ENCODE measurements at regions of chr9 and their contacts with region 1.

Region 1: DNA sequence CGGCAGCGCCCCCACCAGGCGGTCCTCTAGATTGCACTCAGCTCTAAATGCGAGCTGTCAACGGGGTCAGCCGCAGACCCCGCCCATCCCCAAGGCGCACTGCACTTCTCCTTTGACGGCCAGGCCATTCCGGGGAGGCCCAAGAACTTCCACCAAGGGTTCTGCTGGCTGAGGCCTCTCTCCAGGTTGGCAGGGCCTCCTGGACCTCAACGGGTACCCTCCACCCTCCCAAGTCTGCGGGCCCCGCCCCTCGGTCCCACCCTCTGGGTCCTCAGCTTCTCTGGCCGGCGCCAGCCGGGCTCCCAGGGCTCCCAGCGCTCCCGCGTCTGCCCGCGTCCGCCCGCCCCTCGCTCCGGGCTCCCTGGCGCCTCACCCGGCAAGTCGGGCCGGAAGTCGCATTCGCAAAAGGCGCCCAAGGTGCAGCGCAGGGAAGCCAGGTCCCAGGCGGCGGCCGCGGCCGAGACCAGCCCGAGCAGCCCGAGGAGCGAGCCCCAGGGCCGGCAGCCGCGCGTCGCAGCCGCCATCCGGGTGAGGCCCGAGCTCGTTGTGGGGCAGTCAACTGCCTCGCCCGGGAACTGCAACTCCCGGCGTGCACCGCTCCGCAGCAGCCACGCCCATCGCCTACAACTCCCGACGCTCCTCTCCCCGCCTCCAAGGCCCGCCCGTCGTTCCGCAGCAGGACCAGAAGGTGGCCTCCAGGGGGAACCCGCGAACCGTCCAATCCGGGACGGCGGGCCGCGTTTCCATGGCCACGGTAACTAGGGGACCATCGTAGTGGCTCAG is at the start of gene TOR2A:
- DNase-seq: peak; percentile 99
- ATAC-seq: peak; percentile 90
- H3K4me3 Mint-ChIP-seq: peak within 1 kb of the TSS; percentile 72
- H3K27ac Mint-ChIP-seq: no peak within 1 kb of the TSS
- H3K4me1 Mint-ChIP-seq: peaks cover 11% of the 10 kb centered on the region
- H3K27me3 Mint-ChIP-seq: peaks cover 7% of the 10 kb centered on the region
- CTCF ChIP-seq: peak; percentile 63
- total RNA-seq, gene TOR2A: 14.4 to 19.4 TPM (median 16.6 TPM) in 3 replicates

Region 2: GRCh38 chr9:127525401-127526187 is 209.3 kb before region 1 on chr9:
- CTCF ChIA-PET with region 1: interaction called, 40 read pairs
- POLR2A ChIA-PET with region 1: interaction called, 4 read pairs
- DNase-seq: no peak
- ATAC-seq: no peak
- H3K4me3 Mint-ChIP-seq: no peak overlapping the region
- H3K27ac Mint-ChIP-seq: no peak overlapping the region; the same call in 1 of the 2 replicates
- H3K4me1 Mint-ChIP-seq: peaks cover 32% of the 10 kb centered on the region
- H3K27me3 Mint-ChIP-seq: no peaks in the 10 kb centered on the region; the same call in 1 of the 2 replicates
- CTCF ChIP-seq: peak; percentile 61

Region 3: DNA sequence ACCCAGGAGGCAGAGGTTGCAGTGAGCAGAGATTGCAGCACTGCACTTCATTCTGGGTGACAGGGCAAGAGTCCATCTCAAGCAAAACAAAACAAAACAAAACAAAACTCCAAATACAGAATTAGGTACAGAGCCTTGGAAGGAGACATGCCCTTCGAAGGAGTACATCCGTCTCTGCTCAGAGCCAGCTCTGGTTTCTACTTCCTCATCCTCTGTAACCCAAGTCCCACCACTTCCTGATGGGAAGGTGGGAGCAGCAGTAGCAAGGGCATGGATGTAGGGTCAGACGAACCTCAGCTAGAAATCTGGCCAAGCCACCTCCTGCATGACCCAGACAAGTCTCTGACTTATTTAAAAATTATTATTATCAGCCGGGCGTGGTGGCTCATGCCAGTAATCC is 139.3 kb before region 1 on chr9:
- CTCF ChIA-PET with region 1: interaction called, 80 read pairs
- POLR2A ChIA-PET with region 1: no interaction called
- DNase-seq: no peak
- ATAC-seq: no peak
- H3K4me3 Mint-ChIP-seq: no peak overlapping the region
- H3K27ac Mint-ChIP-seq: no peak overlapping the region
- H3K4me1 Mint-ChIP-seq: peaks cover 10% of the 10 kb centered on the region
- H3K27me3 Mint-ChIP-seq: no peaks in the 10 kb centered on the region
- CTCF ChIP-seq: no peak

Region 4: GRCh38 chr9:127707726-127708147 is 27.2 kb before region 1 on chr9:
- CTCF ChIA-PET with region 1: interaction called, 56 read pairs
- POLR2A ChIA-PET with region 1: interaction called, 3 read pairs
- DNase-seq: no peak
- ATAC-seq: peak; percentile 19
- H3K4me3 Mint-ChIP-seq: no peak overlapping the region
- H3K27ac Mint-ChIP-seq: no peak overlapping the region
- H3K4me1 Mint-ChIP-seq: peaks cover 22% of the 10 kb centered on the region
- H3K27me3 Mint-ChIP-seq: no peaks in the 10 kb centered on the region
- CTCF ChIP-seq: no peak

Region 5: GRCh38 chr9:127770905-127771569 is 36.1 kb after region 1 on chr9:
- CTCF ChIA-PET with region 1: interaction called, 54 read pairs
- POLR2A ChIA-PET with region 1: interaction called, 9 read pairs
- DNase-seq: peak; percentile 100
- ATAC-seq: peak; percentile 97
- H3K4me3 Mint-ChIP-seq: peak overlapping the region; percentile 84
- H3K27ac Mint-ChIP-seq: no peak overlapping the region
- H3K4me1 Mint-ChIP-seq: peaks cover 32% of the 10 kb centered on the region
- H3K27me3 Mint-ChIP-seq: peaks cover 11% of the 10 kb centered on the region
- CTCF ChIP-seq: no peak

Region 6: DNA sequence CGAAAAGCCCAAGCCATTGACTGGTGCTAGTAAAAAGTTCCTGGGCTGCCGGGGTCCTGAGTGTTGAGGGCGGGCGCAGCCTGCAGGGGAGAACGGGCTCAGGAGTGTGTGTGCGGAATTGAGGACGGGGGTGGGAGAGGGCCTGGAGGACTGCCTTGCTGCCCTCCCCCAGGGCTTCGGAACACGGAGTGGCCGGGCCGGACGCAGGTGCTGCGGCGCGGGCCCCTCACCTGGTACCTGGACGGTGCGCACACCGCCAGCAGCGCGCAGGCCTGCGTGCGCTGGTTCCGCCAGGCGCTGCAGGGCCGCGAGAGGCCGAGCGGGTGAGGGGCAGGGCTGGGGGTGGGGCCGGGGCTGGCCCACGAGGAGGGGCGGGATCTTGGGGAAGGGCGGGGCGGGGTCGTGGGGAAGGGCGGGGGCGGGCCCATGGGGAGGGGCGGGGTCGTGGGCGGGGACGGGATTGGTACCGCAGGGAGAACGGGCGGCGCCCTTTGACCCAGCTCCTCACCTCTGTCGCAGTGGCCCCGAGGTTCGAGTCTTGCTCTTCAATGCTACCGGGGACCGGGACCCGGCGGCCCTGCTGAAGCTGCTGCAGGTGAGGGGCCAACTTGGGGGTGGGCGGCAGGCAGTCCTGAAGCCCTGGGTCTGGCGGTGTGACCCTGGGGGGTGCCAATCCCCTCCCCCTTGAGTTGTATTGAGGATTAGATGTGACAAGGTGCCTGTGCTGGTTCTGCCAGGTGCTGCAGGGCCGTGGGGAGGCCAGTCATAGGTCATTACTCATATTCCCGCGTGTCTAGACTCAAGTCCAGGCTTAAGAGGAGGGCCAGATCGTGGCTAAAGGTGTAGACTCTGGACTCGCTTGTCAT is 74.8 kb after region 1 on chr9:
- CTCF ChIA-PET with region 1: interaction called, 11 read pairs
- POLR2A ChIA-PET with region 1: no interaction called
- DNase-seq: peak; percentile 69
- ATAC-seq: peak; percentile 93
- H3K4me3 Mint-ChIP-seq: peak overlapping the region; percentile 45
- H3K27ac Mint-ChIP-seq: no peak overlapping the region
- H3K4me1 Mint-ChIP-seq: no peaks in the 10 kb centered on the region
- H3K27me3 Mint-ChIP-seq: no peaks in the 10 kb centered on the region
- CTCF ChIP-seq: no peak